Heart left ventricle (tissue), 16 donors: ENCODE measurements at regions of chr7 and their contacts with region 1.

Region 1: GRCh38 chr7:125061776-125062397 is 132.3 kb upstream of the POT1 start:
- DNase-seq: no peak
- ATAC-seq: no peak
- H3K4me3 ChIP-seq: no peak overlapping the region
- H3K27ac ChIP-seq: no peak overlapping the region
- H3K4me1 ChIP-seq: no peaks in the 10 kb centered on the region
- H3K27me3 ChIP-seq: peaks cover 0 to 9% (median 0%) of the 10 kb centered on the region in 9 donors
- CTCF ChIP-seq: no peak
- POLR2A ChIP-seq: no peak

Region 2: DNA sequence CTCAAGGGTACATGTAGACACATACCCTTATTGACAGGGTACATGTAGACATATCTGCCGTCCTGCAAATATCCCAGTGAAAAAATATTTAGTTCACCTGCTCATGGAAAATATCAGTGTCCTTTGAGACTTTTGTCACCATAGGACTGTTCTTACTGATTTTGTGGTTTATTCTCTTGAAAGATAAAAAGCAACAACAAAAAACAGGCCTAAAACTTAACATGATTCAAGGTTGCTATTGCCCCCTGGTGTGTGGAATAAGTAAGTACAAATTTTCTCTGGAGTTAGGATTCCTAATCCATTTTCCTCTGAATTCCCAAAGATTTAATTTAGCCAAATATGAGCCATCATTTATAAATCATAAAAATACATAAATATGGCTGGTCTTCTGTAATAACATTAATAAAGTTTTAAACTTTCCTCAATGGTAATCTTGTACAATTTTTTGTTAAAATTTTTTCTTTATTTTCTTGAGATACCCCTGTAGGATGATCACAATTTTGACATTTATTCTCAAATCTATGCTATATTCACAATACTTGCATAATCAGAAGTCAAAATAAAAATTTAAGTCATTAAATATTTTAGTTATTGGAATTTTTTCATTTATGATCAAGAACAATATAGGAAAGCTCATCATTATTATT is 609.2 kb after region 1 on chr7:
- intact Hi-C with region 1: loop called (anchors 2 to 10 kb)
- DNase-seq: no peak
- ATAC-seq: no peak
- H3K4me3 ChIP-seq: no peak overlapping the region
- H3K27ac ChIP-seq: no peak overlapping the region
- H3K4me1 ChIP-seq: no peaks in the 10 kb centered on the region
- H3K27me3 ChIP-seq: no peaks in the 10 kb centered on the region
- CTCF ChIP-seq: peak in 11 of 12 donors; percentile 9 to 58 (median 25)
- POLR2A ChIP-seq: no peak